H1 (cell line): ENCODE measurements at regions of chr14 and their contacts with region 1.

Region 1: DNA sequence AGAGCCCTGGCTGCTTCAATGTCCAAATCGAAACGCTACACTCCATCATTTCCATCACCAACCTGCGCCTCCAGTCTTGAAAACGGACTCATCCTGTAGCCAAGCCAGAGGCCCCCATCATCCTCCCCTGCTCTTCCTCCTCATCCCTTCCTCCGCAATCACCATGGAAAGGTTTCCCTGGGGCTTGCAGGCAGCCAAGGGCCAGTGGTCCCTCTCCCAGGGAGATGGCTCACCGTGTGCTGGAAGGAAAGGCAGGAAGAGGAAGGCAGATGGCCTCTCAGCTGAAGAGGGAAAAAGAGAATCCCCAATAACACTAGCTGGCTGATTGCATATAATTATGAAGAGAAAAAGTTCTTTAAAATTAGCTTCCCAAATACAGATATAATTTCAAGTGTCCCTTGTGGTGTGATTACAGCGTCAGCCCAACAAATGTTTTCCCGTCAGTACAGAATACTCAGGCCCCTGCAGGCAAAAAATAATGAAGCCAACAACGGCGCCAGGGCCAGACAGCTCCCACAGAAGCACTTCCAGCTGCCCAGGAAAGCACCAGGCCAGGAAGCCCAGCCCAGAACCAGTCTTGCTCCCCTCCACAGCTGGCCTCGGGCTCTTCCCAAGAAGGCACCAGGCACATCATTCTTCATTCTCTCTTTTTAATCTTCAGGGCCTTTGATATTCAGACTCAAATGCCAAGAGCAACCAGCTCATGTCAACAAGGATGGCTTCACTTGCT is 24.7 kb downstream of the ITPK1 start:
- DNase-seq: no peak
- H3K4me3 ChIP-seq: no peak overlapping the region
- H3K27ac ChIP-seq: no peak overlapping the region
- H3K4me1 ChIP-seq: peaks cover 0 to 26% (median 10%) of the 10 kb centered on the region in 4 experiments; a peak in 6 of 7 replicates
- H3K27me3 ChIP-seq: no peaks in the 10 kb centered on the region
- CTCF ChIP-seq: no peak
- EP300 ChIP-seq: no peak
- POLR2A ChIP-seq: no peak
- RAD21 ChIP-seq: no peak

Region 2: GRCh38 chr14:93103392-93104080 is 12.5 kb after region 1 on chr14:
- CTCF ChIA-PET with region 1: interaction called, 78 read pairs
- POLR2A ChIA-PET with region 1: interaction called, 7 read pairs
- DNase-seq: no peak
- H3K4me3 ChIP-seq: no peak overlapping the region
- H3K27ac ChIP-seq: no peak overlapping the region
- H3K4me1 ChIP-seq: peaks cover 3 to 17% (median 10%) of the 10 kb centered on the region in 4 experiments
- H3K27me3 ChIP-seq: no peaks in the 10 kb centered on the region
- CTCF ChIP-seq: no peak
- EP300 ChIP-seq: no peak
- POLR2A ChIP-seq: no peak
- RAD21 ChIP-seq: no peak